Activated naive CD4-positive, alpha-beta T cell treated with anti-CD3 and anti-CD28 coated beads for 36 hours (primary cell): ENCODE measurements at regions of chr19 and their contacts with region 1.

Region 1: GRCh38 chr19:47190167-47190727 is 40.8 kb downstream of the BBC3 start:
- DNase-seq: peak; percentile 87
- H3K4me3 Mint-ChIP-seq: peak overlapping the region; percentile 38
- H3K27ac Mint-ChIP-seq: peak overlapping the region; percentile 76
- H3K4me1 Mint-ChIP-seq: peaks cover 73% of the 10 kb centered on the region
- H3K27me3 Mint-ChIP-seq: no peaks in the 10 kb centered on the region

Region 2: GRCh38 chr19:47035127-47036096 is 154.8 kb before region 1 on chr19:
- CTCF ChIA-PET with region 1: no interaction called
- intact Hi-C with region 1: no loop called
- DNase-seq: peak; percentile 97
- H3K4me3 Mint-ChIP-seq: peak overlapping the region; percentile 81
- H3K27ac Mint-ChIP-seq: peak overlapping the region; percentile 43
- H3K4me1 Mint-ChIP-seq: peaks cover 19% of the 10 kb centered on the region
- H3K27me3 Mint-ChIP-seq: peaks cover 8% of the 10 kb centered on the region

Region 3: GRCh38 chr19:47094557-47095475 is 95.4 kb before region 1 on chr19:
- CTCF ChIA-PET with region 1: no interaction called
- intact Hi-C with region 1: loop called (anchors 5 kb)
- DNase-seq: peak; percentile 81
- H3K4me3 Mint-ChIP-seq: peak overlapping the region; percentile 41
- H3K27ac Mint-ChIP-seq: peak overlapping the region; percentile 94
- H3K4me1 Mint-ChIP-seq: peaks cover 53% of the 10 kb centered on the region
- H3K27me3 Mint-ChIP-seq: no peaks in the 10 kb centered on the region

Region 4: GRCh38 chr19:47143322-47144073 is 46.7 kb before region 1 on chr19:
- CTCF ChIA-PET with region 1: interaction called, 21 read pairs
- intact Hi-C with region 1: loop called (anchors 5 kb)
- DNase-seq: no peak
- H3K4me3 Mint-ChIP-seq: no peak overlapping the region
- H3K27ac Mint-ChIP-seq: peak overlapping the region; percentile 39
- H3K4me1 Mint-ChIP-seq: peaks cover 76% of the 10 kb centered on the region
- H3K27me3 Mint-ChIP-seq: no peaks in the 10 kb centered on the region

Region 5: GRCh38 chr19:47176627-47177090 is 13.6 kb before region 1 on chr19:
- CTCF ChIA-PET with region 1: interaction called, 6 read pairs
- intact Hi-C with region 1: loop called (anchors 1 kb)
- DNase-seq: peak; percentile 77
- H3K4me3 Mint-ChIP-seq: peak overlapping the region; percentile 51
- H3K27ac Mint-ChIP-seq: peak overlapping the region; percentile 98
- H3K4me1 Mint-ChIP-seq: peaks cover 74% of the 10 kb centered on the region
- H3K27me3 Mint-ChIP-seq: no peaks in the 10 kb centered on the region

Region 6: DNA sequence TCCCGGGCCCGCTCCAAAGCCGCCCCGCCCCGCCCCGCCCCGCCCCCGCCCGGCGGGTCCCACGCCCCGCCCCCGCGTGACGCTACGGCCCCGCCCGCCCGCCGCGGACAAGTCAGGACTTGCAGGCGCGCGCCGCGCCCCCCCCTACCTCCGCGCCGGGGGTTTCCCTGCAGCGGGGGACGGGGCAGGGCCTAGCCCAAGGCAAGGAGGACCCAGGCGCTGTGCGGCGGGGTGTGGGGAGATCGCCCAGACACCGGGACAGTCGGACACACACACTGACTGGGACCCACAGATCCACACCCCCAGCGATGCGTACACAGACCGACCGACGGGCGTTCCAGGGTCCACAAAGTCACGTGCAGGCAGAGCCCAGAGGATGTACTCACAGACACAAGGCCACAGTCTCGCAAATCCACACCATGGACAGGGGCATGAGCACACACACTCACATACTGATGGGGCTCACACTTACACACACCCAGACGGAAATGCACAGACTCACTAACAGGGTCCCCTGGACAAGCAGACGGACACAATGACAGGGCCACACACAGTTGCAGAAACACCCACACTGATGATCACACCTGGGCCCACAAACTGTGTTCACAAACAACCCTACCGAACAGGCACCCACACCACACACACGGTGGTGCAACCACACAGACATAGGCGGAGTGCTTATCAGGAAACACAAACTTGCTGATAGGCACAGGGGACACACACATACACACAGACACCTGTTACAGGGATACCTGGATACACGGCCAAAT is 41.2 kb after region 1 on chr19:
- CTCF ChIA-PET with region 1: interaction called, 3 read pairs
- intact Hi-C with region 1: loop called (anchors 1 kb)
- DNase-seq: peak; percentile 95
- H3K4me3 Mint-ChIP-seq: peak overlapping the region; percentile 77
- H3K27ac Mint-ChIP-seq: peak overlapping the region; percentile 87
- H3K4me1 Mint-ChIP-seq: peaks cover 22% of the 10 kb centered on the region
- H3K27me3 Mint-ChIP-seq: no peaks in the 10 kb centered on the region

Region 7: DNA sequence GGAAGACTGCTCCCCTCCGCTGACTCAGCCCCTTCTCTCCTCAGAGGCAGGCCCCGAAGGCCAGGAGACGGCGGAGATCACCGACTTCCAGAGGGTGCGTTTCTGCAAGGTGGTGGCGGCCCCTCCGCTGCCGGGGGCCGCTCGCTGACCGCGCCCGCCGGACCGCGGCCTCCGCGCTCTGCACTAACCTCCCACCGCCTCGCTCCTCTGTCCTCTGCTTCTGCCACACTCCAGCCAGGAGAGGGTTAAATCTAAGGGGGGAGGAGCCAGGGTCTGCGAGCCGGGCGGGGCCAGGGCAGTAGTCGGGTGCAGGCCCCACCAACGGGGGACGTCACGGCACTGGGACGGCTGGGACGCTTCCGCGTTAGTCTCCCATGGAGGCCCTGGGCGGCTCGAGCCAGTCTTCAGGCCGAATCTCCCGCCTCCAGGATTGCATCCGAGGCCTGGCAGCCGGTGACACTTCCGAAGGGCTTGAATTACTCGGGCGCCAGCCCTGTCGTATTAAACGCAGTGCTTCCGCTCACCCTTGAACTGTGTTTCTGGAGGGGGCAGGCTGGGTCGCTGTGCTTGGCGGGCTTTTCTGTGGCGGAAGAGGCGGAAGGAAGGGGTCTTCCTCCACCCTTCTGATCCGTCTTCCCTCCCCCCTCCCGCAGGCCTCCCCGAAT is 83.2 kb after region 1 on chr19:
- CTCF ChIA-PET with region 1: no interaction called
- intact Hi-C with region 1: loop called (anchors 1 kb)
- DNase-seq: peak; percentile 90
- H3K4me3 Mint-ChIP-seq: peak overlapping the region; percentile 96
- H3K27ac Mint-ChIP-seq: peak overlapping the region; percentile 97
- H3K4me1 Mint-ChIP-seq: peaks cover 22% of the 10 kb centered on the region
- H3K27me3 Mint-ChIP-seq: no peaks in the 10 kb centered on the region